Astrocyte of the cerebellum (primary cell): ENCODE measurements at regions of chr13 and their contacts with region 1.

Region 1: GRCh38 chr13:68481130-68481529 is 1251.0 kb upstream of the PCDH9 start:
- DNase-seq: no peak
- H3K4me3 ChIP-seq: no peak overlapping the region
- CTCF ChIP-seq: no peak

Region 2: DNA sequence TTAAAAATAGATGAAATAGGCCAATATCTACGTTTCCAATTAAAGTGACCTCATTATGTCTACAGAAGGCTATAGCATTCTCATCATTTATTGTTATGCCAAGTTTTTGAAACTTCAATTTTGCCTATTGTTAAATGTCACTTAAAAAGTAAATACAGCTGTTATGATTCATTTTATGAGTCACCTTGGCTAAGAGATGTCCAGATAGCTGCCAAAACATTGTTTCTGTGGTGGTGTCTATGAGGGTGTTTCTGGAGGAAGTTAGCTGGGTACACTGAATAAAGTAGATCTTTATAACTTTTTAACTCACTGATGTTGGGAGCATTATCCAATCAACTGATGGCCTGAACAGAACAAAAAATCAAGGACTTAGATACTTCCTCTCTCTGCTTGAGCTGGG is 41.3 kb before region 1 on chr13:
- in situ Hi-C with region 1: loop called (anchors 5 kb)
- DNase-seq: peak; percentile 76
- H3K4me3 ChIP-seq: no peak overlapping the region
- CTCF ChIP-seq: no peak